Left colon (tissue), 2 donors: ENCODE measurements at regions of chr4 and their contacts with region 1.

Region 1: GRCh38 chr4:88366460-88366859 is 12.2 kb upstream of the HERC6 start:
- DNase-seq: no peak
- ATAC-seq: no peak

Region 2: DNA sequence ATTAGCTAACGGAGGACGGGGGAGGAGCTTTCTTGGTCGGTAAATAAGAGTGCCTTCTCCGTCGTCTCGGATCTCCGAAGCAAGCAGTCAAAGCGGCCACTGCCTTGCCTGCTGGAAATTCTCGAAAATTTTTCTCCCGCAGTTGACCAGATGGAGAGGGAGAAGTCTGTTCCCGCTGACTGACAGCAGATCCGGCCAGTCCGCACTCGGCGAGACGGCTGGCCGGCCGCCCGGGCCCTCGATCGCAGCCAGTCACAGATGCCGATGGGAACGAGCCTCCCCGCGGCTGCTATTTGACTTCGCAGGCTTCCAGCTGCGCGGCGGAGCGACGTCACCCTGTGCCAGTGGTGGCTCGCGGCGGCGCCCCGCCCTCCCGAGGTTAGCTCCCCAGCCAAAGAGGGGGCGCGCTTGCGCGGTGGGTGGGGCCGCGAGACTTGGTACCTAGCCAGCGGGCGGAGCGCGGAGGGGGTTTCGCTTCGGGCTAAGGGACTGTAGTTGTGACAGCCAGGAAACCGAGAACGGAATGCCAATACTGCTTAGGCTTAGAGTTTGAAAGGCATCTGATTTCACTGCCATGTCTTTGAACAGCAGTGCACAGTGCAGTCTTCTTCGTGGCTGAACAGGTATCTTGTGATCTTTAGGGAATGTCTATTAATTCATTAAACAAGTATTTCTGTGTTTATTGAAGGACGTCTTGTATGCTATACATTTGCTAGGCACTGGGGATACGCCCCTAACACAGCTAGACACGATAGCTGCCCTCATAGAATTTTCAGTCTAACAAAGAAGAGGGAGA is 81.8 kb before region 1 on chr4 and contains the start of gene PPM1K:
- intact Hi-C with region 1: loop called in 1 of 2 experiments (anchors 5 kb)
- DNase-seq: peak; percentile 99
- ATAC-seq: peak; percentile 95
- total RNA-seq, gene PPM1K: 4.7 to 9.9 TPM